Posterior cingulate gyrus (tissue), 11 donors: ENCODE measurements at regions of chr14 and their contacts with region 1.

Region 1: DNA sequence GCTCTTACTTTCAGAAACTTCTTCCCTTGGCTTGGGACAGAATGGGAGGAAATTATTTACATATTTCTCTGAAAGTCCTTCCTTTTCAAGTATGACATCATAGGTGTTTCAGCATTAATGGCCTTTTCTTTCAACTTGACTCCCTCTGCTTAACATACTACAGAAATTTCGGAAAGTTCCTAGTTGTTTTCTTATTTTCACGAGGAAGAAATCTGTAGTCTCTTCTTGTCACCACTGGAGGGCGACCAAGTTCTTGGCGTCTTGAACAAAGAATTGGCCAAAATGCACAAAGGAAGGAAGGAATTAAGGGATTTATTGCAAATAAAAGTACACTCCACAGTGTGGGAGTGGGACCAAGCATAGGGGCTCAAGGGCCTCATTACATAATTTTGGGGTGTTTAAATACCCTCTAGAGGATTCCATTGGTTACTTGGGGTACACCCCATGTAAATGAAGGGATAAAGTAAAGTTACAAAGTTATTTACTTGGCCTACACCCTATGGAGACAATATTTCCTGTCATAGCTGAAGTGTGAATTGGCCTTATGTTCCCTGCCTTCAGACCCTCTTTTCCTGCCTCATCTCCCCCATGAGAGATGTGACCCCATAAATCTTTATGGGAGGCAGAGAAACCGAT is 70.4 kb downstream of the RPL10L start:
- DNase-seq: peak in 3 of 10 donors; percentile 8 to 19 (median 11)

Region 2: DNA sequence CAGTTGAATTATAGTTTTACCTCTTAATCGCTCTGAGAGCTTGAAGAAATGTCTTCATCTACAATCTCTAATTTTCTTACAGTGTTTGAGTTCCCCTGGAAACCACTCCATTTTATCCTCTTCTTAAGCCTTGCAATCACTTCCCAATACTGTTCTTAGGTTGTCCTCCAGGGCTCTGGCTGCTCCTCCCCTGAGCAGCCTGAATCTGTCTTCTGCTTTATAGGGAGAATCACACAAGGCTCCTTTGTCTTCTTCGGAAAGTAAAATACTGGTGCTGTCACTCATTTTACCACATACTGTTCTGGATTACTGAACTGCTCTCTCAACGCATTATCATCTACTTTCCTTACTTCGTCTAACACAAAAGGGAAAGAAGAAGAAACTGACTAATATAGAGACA is 960.5 kb after region 1 on chr14:
- intact Hi-C with region 1: loop called (anchors 10 kb)
- DNase-seq: no peak